T-cell (primary cell): ENCODE measurements at regions of chrX and their contacts with region 1.

Region 1: DNA sequence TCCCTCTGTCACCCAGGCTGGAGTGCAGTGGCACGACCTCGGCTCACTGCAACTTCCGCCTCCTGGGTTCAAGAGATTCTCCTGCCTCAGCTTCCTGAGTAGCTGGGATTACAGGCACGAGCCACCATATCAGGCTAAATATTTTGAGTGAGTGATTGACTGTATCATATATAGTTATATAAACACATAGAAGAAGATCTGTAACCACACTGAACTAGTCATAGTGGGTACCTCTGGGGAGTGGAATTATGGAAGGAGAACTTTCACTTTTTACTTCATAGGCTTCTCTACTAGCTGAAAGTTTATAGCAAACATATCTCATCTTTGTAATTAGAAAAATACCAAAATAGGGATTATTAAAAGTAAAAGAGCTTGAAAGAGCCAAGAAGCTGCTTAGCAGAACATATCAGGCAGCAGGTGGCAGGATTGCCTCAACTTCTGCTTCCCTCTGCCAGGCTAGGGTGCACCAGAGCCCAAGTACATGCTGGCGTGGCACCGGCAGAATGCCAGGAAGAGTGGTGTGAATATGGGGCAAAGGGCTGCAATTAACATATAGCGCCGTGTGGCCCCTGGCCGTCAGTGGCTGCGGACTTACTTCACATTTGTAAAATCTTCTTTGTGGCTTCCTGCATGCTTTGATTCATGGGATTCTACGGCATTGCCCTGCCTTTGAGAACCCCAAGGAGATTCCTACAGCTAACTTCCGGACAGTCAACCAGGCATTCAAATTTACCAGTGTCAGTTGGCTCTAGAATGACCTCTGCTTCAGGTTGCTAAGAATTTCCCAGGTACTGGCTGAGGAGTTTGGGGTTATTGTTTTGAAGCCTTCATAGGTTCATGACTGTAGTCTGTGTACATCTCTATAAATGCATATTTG is 39.4 kb upstream of the CD40LG start:
- DNase-seq: peak; percentile 28 to 78 (median 56)
- ATAC-seq: peak; percentile 71 to 93 (median 80)
- H3K4me3 ChIP-seq: peak overlapping the region in 1 of 2 donors; percentile 19
- H3K4me3 Mint-ChIP-seq: peak overlapping the region; percentile 34 to 53 (median 51)
- H3K27ac ChIP-seq: peak overlapping the region; percentile 55
- H3K27ac Mint-ChIP-seq: peak overlapping the region; percentile 83 to 85
- H3K4me1 ChIP-seq: peaks cover 0 to 20% of the 10 kb centered on the region in 2 experiments
- H3K4me1 Mint-ChIP-seq: peaks cover 29 to 54% (median 36%) of the 10 kb centered on the region in 3 donors
- H3K27me3 ChIP-seq: no peaks in the 10 kb centered on the region
- H3K27me3 Mint-ChIP-seq: peaks cover 0 to 6% of the 10 kb centered on the region in 2 donors

Region 2: DNA sequence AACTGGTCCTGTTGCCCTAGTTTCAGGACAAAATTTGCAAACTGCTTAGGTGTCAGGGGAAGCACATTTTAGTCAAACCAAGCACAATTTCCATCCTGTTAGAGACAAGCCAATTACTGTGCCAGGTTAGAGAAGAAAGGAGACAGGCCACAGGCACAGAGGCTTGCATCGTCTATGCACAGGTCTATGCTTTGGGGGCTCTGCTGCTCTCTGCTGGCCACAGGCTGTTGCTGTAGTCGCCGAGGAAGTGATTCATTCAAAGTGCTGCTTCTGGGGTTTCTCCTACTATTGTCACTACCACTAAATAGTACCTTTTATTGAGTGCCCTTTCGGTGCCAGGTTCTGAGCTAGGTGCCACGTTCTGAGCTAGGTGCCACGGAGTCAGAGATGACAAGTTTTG is 31.0 kb before region 1 on chrX:
- CTCF ChIA-PET with region 1: interaction called, 3 to 10 read pairs
- POLR2A ChIA-PET with region 1: interaction called in 1 of 2 experiments, 3 read pairs
- DNase-seq: peak; percentile 26 to 78 (median 64)
- ATAC-seq: peak; percentile 97 to 100 (median 100)
- H3K4me3 ChIP-seq: no peak overlapping the region
- H3K4me3 Mint-ChIP-seq: no peak overlapping the region
- H3K27ac ChIP-seq: peak overlapping the region; percentile 53
- H3K27ac Mint-ChIP-seq: peak overlapping the region; percentile 65 to 88
- H3K4me1 ChIP-seq: peaks cover 2 to 11% of the 10 kb centered on the region in 2 experiments
- H3K4me1 Mint-ChIP-seq: peaks cover 13 to 17% (median 13%) of the 10 kb centered on the region in 3 donors
- H3K27me3 ChIP-seq: no peaks in the 10 kb centered on the region
- H3K27me3 Mint-ChIP-seq: peaks cover 0 to 22% of the 10 kb centered on the region in 2 donors